Heart left ventricle (tissue), 16 donors: ENCODE measurements at regions of chr1 and their contacts with region 1.

Region 1: DNA sequence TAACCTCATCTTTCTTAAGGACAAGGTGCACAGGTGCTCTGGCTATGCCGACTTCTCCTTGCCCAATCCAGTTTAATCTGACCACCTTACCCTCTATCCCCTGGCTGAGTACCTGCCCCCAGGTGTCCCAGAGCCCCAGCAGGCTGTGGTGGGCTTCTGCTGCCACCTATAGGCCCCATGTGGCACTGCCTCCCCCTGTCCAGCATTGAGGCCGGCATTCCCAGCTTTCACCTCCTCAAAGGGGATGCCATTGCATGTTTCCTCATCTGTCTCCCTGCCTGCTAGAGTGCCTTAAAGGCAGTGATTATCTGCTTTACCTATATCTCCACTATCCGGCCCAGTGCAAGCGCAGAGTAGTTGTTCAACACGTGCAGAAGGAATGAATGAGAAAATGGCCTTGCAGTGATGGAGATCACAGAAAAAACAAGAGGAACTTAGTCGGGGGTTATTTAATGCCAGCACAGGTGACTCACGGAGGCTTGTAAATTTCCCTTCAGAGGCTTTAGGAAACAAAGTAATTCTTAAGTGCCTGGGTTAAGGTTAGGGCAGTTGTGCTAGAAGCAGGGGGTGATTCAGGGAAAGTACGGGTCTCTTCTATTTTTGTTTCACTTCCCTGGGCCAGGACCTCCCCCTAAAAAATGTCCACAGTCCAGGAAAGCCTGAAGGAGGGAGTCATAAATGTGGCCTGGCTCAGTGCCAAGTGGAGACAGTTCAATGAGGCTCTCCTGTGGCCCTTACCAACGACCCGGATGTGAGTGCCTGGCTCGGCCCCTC is 131.8 kb upstream of the NGF start:
- DNase-seq: peak in 3 of 5 donors; percentile 32 to 68 (median 45)
- ATAC-seq: peak; percentile 60 to 74 (median 64)
- H3K4me3 ChIP-seq: no peak overlapping the region
- H3K27ac ChIP-seq: no peak overlapping the region
- H3K4me1 ChIP-seq: peaks cover 0 to 11% (median 0%) of the 10 kb centered on the region in 12 donors
- H3K27me3 ChIP-seq: no peaks in the 10 kb centered on the region
- CTCF ChIP-seq: peak; percentile 69 to 86 (median 80)
- POLR2A ChIP-seq: no peak

Region 2: DNA sequence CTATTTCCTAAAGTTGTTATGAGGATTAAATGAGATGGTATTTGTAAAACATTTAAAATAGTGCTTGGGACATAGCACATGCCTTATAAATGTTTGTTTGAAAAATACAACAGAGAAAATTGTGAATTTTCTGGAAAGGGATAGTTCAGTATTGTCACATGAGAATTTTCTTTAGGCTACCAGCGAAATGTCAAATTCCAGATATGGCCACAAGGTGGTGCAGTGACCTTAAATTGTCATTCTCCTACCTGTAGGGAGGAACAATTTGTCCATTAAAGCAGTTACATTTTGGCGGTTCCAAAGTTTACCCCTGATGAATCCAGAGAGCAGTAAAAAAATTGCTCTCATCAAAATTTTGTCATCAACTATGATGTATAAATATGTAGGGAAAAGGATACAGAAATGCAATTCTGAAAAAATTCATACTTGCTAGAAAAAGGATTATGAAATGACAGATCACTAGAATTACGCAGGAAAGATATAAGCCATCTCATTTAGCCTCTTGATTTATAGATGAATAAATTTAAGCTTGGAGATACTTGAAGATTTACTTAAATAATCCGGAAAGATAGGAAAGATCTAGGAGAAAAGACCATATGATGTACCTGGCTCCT is 490.5 kb before region 1 on chr1:
- intact Hi-C with region 1: loop called in 1 of 10 experiments (anchors 10 kb)
- DNase-seq: peak in 4 of 5 donors; percentile 25 to 39 (median 38)
- ATAC-seq: peak in 1 of 4 donors; percentile 51
- H3K4me3 ChIP-seq: no peak overlapping the region
- H3K27ac ChIP-seq: no peak overlapping the region
- H3K4me1 ChIP-seq: no peaks in the 10 kb centered on the region
- H3K27me3 ChIP-seq: peaks cover 0 to 10% (median 0%) of the 10 kb centered on the region in 9 donors
- CTCF ChIP-seq: peak; percentile 73 to 90 (median 80)
- POLR2A ChIP-seq: no peak

Region 3: DNA sequence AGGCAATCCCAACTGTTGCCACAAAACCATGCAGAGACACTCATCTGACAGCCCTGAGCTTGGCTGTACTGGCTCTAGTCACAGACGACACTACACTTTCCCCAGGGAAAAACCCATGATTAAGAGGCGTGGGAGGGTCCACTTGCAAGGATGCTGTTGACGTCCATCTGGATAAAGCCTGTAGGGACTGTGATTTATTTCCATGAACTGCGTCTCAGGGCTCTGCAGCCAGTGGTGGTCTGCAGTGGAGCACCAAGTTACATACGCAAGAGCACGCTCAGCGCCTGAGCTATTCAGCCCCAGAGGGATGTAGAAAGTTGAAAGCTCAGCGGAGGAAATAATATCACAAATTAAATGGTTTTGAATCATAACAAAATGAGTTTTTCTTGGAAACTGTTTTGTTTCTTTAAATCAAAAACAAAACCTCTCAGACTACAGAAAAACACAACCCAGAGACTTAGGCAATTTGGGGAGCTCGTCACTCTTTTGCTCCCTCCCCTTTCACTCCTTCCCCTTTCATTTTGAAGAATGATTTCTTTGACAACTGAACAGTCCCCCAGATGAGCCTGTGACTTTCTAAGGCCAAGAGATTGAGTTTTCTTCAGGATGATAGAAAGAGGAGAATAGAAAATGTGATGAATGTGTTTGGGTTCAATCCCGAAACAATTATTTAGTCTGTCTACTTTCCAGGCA is 203.0 kb before region 1 on chr1:
- intact Hi-C with region 1: loop called in 4 of 10 experiments (anchors 5 to 10 kb)
- DNase-seq: peak in 4 of 5 donors; percentile 59 to 75 (median 67)
- ATAC-seq: peak; percentile 75 to 91 (median 84)
- H3K4me3 ChIP-seq: peak overlapping the region in 1 of 12 donors; percentile 6
- H3K27ac ChIP-seq: peak overlapping the region in 10 of 12 donors; percentile 29 to 75 (median 66)
- H3K4me1 ChIP-seq: peaks cover 0 to 12% (median 0%) of the 10 kb centered on the region in 12 donors
- H3K27me3 ChIP-seq: no peaks in the 10 kb centered on the region
- CTCF ChIP-seq: no peak
- POLR2A ChIP-seq: no peak

Region 4: DNA sequence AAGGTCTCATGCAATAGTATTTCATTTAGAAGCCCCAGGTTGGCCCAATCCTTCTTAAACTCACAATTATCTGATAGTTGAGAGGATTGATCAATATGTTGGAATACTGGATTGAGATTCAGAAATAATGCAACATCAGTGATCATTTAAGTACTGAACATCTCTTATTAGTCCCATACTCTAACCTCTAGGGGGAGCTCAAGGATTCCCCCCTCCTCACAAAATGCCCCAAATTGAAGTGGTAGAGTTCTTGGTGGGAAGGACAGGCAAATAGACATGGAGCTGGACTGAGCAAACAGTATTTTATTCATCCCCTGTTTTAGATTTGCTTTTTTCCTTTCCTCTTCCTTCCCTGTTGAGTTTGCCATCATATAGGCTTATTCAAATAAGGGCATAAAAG is 194.7 kb before region 1 on chr1:
- intact Hi-C with region 1: loop called in 3 of 10 experiments (anchors 10 kb)
- DNase-seq: no peak
- ATAC-seq: no peak
- H3K4me3 ChIP-seq: no peak overlapping the region
- H3K27ac ChIP-seq: peak overlapping the region in 5 of 12 donors; percentile 7 to 66 (median 28)
- H3K4me1 ChIP-seq: peaks cover 0 to 16% (median 0%) of the 10 kb centered on the region in 12 donors
- H3K27me3 ChIP-seq: no peaks in the 10 kb centered on the region
- CTCF ChIP-seq: peak in 11 of 12 donors; percentile 22 to 51 (median 33)
- POLR2A ChIP-seq: no peak

Region 5: DNA sequence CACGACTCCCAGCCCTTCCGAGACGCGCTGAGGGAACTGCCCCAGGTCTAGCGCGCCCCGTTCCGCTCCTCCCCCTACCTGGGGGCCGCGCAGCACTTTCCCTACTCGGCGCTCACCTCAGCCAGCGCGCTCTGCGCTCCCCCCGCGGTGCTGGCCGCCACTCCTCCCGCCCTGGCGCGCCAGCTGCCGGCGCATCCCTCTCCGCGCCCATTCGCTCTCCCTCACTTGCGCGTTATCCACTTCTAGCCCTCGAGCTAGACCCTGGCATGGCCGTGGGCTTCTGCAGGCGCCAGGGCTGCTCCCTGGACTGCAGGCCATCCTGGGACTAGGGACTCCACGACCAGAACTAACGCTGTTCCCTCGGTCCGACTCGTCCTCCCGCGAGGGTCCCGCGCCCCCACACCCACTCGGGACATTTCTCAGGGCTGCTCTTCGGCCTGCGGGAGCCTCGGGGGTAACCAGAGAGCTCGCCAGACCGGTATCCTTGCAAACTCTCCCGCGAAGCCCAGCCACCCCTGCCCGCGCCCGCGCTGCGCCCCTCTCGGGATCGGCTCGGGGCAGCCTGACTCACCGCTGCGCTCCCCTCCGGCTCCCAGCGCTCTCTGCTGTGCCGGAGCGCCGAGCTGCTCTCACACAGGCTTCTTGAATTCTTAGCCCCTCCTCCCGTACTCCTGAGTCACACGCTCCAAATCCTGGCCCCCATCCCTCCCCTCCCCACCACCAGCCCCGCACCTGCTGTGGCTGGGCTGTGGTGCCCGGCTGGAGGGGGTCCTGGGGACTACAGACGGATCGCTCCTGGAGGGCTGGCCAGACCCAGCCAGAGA is 132.0 kb before region 1 on chr1 and contains the start of gene NGF:
- intact Hi-C with region 1: loop called in 3 of 10 experiments (anchors 5 to 10 kb)
- DNase-seq: peak; percentile 44 to 82 (median 68)
- ATAC-seq: peak; percentile 65 to 91 (median 84)
- H3K4me3 ChIP-seq: peak within 1 kb of the TSS; percentile 57 to 91 (median 70)
- H3K27ac ChIP-seq: peak within 1 kb of the TSS; percentile 15 to 91 (median 80)
- H3K4me1 ChIP-seq: peaks cover 0 to 50% (median 22%) of the 10 kb centered on the region in 12 donors
- H3K27me3 ChIP-seq: peaks cover 0 to 32% (median 0%) of the 10 kb centered on the region in 9 donors
- CTCF ChIP-seq: peak in 1 of 12 donors; percentile 12
- POLR2A ChIP-seq: peak; percentile 27 to 77
- total RNA-seq, gene NGF: 0.94 to 13.6 (median 2.9) TPM

Region 6: DNA sequence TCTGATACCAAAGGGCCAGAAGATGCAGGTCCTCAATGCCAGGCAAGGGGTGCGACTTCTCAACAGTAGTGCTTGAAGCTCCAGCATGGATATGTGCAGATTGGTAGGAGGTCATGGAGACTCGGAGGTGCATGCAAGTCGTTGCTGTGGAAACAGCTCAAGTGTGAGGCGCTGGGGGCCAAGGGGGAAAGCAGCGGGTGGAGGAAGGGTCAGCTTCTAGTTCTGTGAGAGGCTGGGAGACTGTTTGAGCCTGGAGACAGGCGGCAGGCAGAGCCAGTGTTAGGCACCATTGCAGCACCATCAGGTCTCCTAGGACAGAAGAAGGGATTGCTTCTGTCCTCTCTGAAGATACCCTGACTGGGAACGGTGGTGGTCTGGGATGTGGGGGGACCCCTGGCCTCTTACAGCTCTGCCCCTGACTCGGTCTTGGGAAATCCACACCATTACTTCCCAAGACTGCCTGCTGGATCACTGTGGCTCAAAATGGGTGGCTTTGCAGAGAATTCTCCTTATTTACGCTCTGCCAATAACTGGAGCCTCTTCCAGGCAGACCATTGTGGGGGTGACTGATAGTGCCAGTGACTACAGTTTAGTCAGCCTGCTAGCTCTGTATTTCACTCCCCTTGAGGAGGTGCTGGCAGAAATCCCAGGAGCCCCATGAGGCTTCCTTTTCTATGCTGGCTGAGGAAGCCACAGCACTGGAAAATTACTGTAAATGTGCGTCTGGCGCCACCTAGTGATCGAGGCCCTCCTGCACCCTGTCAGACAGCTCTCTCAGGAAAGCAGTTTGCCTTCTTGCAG is 125.6 kb after region 1 on chr1:
- intact Hi-C with region 1: loop called in 2 of 10 experiments (anchors 5 to 10 kb)
- DNase-seq: peak; percentile 87 to 92 (median 90)
- ATAC-seq: peak; percentile 81 to 92 (median 89)
- H3K4me3 ChIP-seq: no peak overlapping the region
- H3K27ac ChIP-seq: no peak overlapping the region
- H3K4me1 ChIP-seq: peaks cover 0 to 31% (median 12%) of the 10 kb centered on the region in 12 donors
- H3K27me3 ChIP-seq: no peaks in the 10 kb centered on the region
- CTCF ChIP-seq: peak in 11 of 12 donors; percentile 89 to 98 (median 95)
- POLR2A ChIP-seq: no peak

Region 7: GRCh38 chr1:115642168-115643072 is 172.5 kb after region 1 on chr1:
- intact Hi-C with region 1: no loop called
- DNase-seq: peak; percentile 35 to 72 (median 42)
- ATAC-seq: peak; percentile 44 to 74 (median 74)
- H3K4me3 ChIP-seq: peak overlapping the region; percentile 78 to 96 (median 90)
- H3K27ac ChIP-seq: peak overlapping the region in 11 of 12 donors; percentile 58 to 88 (median 76)
- H3K4me1 ChIP-seq: peaks cover 0 to 37% (median 19%) of the 10 kb centered on the region in 12 donors
- H3K27me3 ChIP-seq: no peaks in the 10 kb centered on the region
- CTCF ChIP-seq: peak in 7 of 12 donors; percentile 8 to 37 (median 16)
- POLR2A ChIP-seq: no peak